Activated naive CD4-positive, alpha-beta T cell treated with anti-CD3 and anti-CD28 coated beads for 36 hours (primary cell): ENCODE measurements at regions of chr22 and their contacts with region 1.

Region 1: GRCh38 chr22:22848364-22848866 is 39.2 kb upstream of the IGLL5 start:
- DNase-seq: peak; percentile 84
- H3K4me3 Mint-ChIP-seq: no peak overlapping the region
- H3K27ac Mint-ChIP-seq: no peak overlapping the region
- H3K4me1 Mint-ChIP-seq: peaks cover 31% of the 10 kb centered on the region
- H3K27me3 Mint-ChIP-seq: no peaks in the 10 kb centered on the region

Region 2: DNA sequence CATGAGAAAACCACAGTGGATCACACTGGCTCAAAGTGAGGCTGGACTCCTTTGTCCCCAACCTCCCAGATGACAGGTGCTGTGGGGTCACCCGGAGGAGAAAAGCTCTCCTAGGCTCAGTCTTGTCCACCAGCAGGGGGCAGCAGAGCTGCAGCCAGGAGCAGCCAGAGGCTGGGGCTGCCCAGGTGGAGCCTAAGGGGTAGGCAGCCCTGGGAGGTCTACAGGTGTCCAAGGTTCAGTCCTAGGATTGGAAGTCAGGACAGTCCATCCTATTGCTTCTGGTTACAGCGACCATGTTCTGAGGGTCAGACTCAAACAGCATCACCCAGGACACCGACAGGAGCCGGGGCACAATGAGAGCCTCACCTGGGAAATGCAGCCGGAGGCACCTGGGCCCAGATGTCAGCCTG is 38.4 kb before region 1 on chr22:
- CTCF ChIA-PET with region 1: interaction called, 53 read pairs
- intact Hi-C with region 1: loop called (anchors 2 kb)
- DNase-seq: peak; percentile 80
- H3K4me3 Mint-ChIP-seq: no peak overlapping the region
- H3K27ac Mint-ChIP-seq: no peak overlapping the region
- H3K4me1 Mint-ChIP-seq: peaks cover 12% of the 10 kb centered on the region
- H3K27me3 Mint-ChIP-seq: no peaks in the 10 kb centered on the region

Region 3: DNA sequence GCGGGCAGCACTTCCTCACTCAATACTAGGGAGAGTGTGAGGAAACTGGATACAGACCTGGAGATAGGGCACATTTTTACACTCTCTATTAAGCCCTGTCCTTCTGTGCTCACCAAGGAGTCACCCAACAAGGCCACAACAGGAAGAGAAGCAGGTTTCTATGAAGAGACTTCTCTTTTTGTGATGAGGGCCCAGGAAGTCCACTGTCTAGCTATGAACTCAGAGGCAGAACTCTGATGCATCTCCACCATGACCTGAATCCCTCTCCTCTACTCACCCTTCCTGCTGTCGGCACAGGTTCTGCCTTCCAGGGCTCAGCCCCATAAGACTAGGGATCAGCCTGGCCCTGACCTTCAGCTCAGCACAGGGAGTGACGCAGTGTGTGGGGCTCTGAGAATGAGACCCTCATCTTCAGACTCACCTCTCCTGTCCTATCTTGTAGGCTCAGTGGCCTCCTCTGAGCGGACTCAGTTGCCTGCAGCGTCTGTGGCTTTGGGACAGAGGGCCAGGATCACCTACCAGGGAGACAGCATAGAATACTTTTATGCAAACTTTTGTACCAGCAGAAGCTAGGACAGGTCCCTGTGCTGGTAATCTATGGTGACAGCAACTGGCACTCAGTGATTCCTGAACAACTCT is 10.1 kb before region 1 on chr22:
- CTCF ChIA-PET with region 1: interaction called, 17 read pairs
- intact Hi-C with region 1: no loop called
- DNase-seq: no peak
- H3K4me3 Mint-ChIP-seq: no peak overlapping the region
- H3K27ac Mint-ChIP-seq: no peak overlapping the region
- H3K4me1 Mint-ChIP-seq: peaks cover 12% of the 10 kb centered on the region
- H3K27me3 Mint-ChIP-seq: no peaks in the 10 kb centered on the region

Region 4: GRCh38 chr22:22877523-22878210 is 29.3 kb after region 1 on chr22:
- CTCF ChIA-PET with region 1: interaction called, 82 read pairs
- intact Hi-C with region 1: loop called (anchors 1 kb)
- DNase-seq: peak; percentile 85
- H3K4me3 Mint-ChIP-seq: no peak overlapping the region
- H3K27ac Mint-ChIP-seq: no peak overlapping the region
- H3K4me1 Mint-ChIP-seq: no peaks in the 10 kb centered on the region
- H3K27me3 Mint-ChIP-seq: no peaks in the 10 kb centered on the region

Region 5: DNA sequence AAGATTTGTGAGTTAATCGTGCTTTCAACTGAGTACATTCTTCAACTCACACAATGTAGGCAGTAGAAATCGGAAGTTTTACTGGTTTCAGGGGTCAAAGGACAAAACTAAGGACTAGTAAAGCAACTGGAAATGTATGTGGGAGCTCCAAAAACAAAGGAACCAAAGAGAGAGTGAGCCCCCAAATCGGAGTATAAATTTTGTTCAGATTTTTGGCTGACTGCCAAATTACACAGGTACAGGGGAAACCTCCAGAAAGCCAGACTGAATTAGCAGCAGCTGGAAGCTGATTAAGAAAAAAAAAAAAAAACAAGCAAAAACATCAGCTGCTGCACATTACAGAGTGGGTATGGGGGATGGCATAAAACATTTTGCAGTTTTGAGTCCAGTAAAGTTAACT is 146.8 kb after region 1 on chr22:
- CTCF ChIA-PET with region 1: no interaction called
- intact Hi-C with region 1: no loop called
- DNase-seq: no peak
- H3K4me3 Mint-ChIP-seq: no peak overlapping the region
- H3K27ac Mint-ChIP-seq: no peak overlapping the region
- H3K4me1 Mint-ChIP-seq: no peaks in the 10 kb centered on the region
- H3K27me3 Mint-ChIP-seq: peaks cover 11% of the 10 kb centered on the region